ENCODE measurements at regions of chr3 and their contacts with region 1.

Region 1: GRCh38 chr3:101724329-101725193 is at the start of gene CEP97:
- DNase-seq: peak; percentile 94
- H3K4me3 ChIP-seq: peak within 1 kb of the TSS; percentile 72 to 96 (median 94)
- H3K27ac ChIP-seq: peak within 1 kb of the TSS; percentile 53
- H3K4me1 ChIP-seq: peaks cover 28% of the 10 kb centered on the region
- H3K27me3 ChIP-seq: no peaks in the 10 kb centered on the region
- CTCF ChIP-seq: no peak
- POLR2A ChIP-seq: peak; percentile 72
- total RNA-seq, gene CEP97: 10.3 and 14.0 TPM in 2 replicates

Region 2: GRCh38 chr3:101685870-101686412 is 38.6 kb before region 1 on chr3:
- CTCF ChIA-PET with region 1: no interaction called
- POLR2A ChIA-PET with region 1: interaction called, 3 read pairs
- dilution Hi-C with region 1: no loop called
- intact Hi-C with region 1: loop called (anchors 2 kb)
- DNase-seq: no peak
- H3K4me3 ChIP-seq: peak overlapping the region; percentile 75 to 96 (median 80)
- H3K27ac ChIP-seq: peak overlapping the region; percentile 78
- H3K4me1 ChIP-seq: peaks cover 20% of the 10 kb centered on the region
- H3K27me3 ChIP-seq: no peaks in the 10 kb centered on the region
- CTCF ChIP-seq: no peak
- POLR2A ChIP-seq: no peak

Region 3: DNA sequence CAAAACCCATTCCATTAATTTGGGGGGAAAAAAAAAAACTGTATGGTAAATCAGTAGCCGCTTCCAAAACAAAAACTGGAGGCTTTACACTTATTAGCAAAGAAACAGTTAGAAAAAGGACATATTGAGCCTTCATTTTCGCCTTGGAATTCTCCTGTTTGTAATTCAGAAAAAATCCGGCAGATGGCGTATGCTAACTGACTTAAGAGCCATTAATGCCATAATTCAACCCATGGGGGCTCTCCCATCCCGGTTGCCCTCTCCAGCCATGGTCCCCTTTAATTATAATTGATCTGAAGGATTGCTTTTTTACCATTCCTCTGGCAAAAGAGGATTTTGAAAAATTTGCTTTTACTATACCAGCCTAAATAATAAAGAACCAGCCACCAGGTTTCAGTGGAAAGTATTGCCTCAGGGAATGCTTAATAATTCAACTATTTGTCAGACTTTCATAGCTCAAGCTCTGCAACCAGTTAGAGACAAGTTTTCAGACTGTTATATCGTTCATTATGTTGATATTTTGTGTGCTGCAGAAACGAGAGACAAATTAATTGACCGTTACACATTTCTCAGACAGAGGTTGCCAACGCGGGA is 28.7 kb before region 1 on chr3:
- CTCF ChIA-PET with region 1: no interaction called
- POLR2A ChIA-PET with region 1: no interaction called
- dilution Hi-C with region 1: no loop called
- intact Hi-C with region 1: loop called (anchors 2 kb)
- DNase-seq: peak; percentile 68
- H3K4me3 ChIP-seq: no peak overlapping the region
- H3K27ac ChIP-seq: no peak overlapping the region
- H3K4me1 ChIP-seq: no peaks in the 10 kb centered on the region
- H3K27me3 ChIP-seq: no peaks in the 10 kb centered on the region
- CTCF ChIP-seq: peak; percentile 50 to 52
- POLR2A ChIP-seq: no peak

Region 4: GRCh38 chr3:101703169-101703568 is 21.4 kb before region 1 on chr3:
- CTCF ChIA-PET with region 1: interaction called, 17 read pairs
- POLR2A ChIA-PET with region 1: interaction called, 3 read pairs
- dilution Hi-C with region 1: no loop called
- intact Hi-C with region 1: no loop called
- DNase-seq: no peak
- H3K4me3 ChIP-seq: no peak overlapping the region
- H3K27ac ChIP-seq: no peak overlapping the region
- H3K4me1 ChIP-seq: no peaks in the 10 kb centered on the region
- H3K27me3 ChIP-seq: peaks cover 3 to 5% of the 10 kb centered on the region in 2 experiments
- CTCF ChIP-seq: no peak
- POLR2A ChIP-seq: no peak

Region 5: DNA sequence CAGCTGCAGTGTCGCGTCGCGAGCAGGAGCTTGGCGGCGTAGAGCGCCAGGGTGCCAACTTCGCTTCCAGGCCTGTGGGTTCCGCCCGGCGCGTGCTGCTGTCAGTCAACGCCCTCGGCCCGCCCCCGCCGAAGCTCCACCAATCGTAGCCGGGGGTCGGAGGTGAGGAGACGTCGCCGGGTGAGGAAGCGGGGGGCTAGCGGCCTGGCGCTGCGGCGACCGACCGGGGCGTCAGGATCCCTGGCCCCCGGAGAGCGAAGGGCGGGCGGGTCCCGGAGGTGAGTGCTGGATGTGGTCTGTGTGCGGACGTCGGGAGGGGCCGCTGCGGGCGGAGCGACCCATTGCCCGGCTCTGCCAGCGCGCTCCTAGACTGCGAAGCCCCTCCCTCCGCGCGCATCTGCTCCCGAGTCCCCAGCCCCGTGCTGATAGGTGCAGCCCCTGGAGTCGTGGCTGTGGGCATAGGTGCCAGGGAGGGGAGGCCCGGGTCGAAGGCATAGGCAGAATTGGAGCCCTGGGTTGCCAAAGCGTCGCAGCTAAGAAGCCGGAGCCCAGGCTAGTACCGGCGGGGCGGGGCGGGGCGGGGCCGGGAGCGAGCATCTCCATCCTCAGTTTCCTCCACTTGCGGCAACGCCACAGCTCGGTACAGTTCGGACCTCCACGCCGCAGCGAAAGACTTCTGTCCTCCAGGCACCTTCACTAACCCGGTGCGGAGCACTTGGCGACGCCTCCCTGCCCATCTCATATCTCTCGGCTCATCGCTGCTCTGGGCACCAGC is 54.7 kb after region 1 on chr3 and contains the start of gene NXPE3:
- CTCF ChIA-PET with region 1: interaction called, 4 read pairs
- POLR2A ChIA-PET with region 1: no interaction called
- dilution Hi-C with region 1: no loop called
- intact Hi-C with region 1: loop called (anchors 2 kb)
- DNase-seq: peak; percentile 90
- H3K4me3 ChIP-seq: peak within 1 kb of the TSS; percentile 56 to 88 (median 78)
- H3K27ac ChIP-seq: peak within 1 kb of the TSS; percentile 54
- H3K4me1 ChIP-seq: peaks cover 24% of the 10 kb centered on the region
- H3K27me3 ChIP-seq: no peaks in the 10 kb centered on the region
- CTCF ChIP-seq: no peak
- POLR2A ChIP-seq: no peak
- total RNA-seq, gene NXPE3: 19.9 and 20.3 TPM in 2 replicates

Region 6: GRCh38 chr3:101836652-101837598 is 112.4 kb after region 1 on chr3:
- CTCF ChIA-PET with region 1: no interaction called
- POLR2A ChIA-PET with region 1: no interaction called
- dilution Hi-C with region 1: no loop called
- intact Hi-C with region 1: no loop called
- DNase-seq: peak; percentile 89
- H3K4me3 ChIP-seq: no peak overlapping the region
- H3K27ac ChIP-seq: no peak overlapping the region
- H3K4me1 ChIP-seq: peaks cover 5% of the 10 kb centered on the region
- H3K27me3 ChIP-seq: no peaks in the 10 kb centered on the region
- CTCF ChIP-seq: no peak
- POLR2A ChIP-seq: no peak